Left lung (tissue), 14 donors: ENCODE measurements at regions of chr12 and their contacts with region 1.

Region 1: DNA sequence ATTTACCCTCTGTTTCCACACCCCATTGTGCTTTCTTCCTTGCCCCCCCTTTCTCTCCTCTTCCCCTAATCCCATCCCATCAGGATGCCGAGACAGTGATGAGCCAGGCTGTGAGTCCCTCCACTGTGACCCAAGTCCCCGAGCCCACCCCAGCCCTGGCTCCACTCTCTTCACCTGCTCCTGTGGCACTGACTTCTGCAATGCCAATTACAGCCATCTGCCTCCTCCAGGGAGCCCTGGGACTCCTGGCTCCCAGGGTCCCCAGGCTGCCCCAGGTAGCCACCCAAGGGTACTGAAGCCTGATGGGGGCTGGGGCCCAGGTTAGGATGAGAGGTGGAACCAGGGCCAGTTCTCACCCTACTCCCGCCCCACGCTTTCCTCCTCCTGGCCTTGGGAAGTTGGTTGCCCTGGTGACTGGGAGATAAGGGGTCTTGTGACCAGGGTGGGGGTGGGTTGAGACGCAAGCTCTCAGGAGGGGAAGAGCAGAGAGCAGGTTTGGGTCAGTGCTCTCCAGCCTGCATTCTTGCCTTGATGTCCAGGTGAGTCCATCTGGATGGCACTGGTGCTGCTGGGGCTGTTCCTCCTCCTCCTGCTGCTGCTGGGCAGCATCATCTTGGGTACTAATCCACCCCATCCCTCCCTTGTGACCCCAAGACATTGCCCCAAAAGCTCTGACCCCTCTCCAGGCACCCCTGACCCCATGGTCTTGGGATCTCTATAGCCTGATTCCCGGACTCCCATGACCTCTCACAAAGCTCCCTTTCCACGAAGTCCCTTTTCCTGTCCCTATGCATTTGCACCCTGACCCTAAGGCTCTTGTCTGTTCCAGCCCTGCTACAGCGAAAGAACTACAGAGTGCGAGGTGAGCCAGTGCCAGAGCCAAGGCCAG is 1.2 kb downstream of the AMHR2 start:
- DNase-seq: peak in 2 of 4 donors; percentile 16 to 32
- ATAC-seq: no peak
- H3K4me3 ChIP-seq: no peak overlapping the region
- H3K27ac ChIP-seq: no peak overlapping the region
- H3K4me1 ChIP-seq: peaks cover 0 to 12% of the 10 kb centered on the region in 2 donors
- H3K27me3 ChIP-seq: no peaks in the 10 kb centered on the region
- CTCF ChIP-seq: no peak

Region 2: DNA sequence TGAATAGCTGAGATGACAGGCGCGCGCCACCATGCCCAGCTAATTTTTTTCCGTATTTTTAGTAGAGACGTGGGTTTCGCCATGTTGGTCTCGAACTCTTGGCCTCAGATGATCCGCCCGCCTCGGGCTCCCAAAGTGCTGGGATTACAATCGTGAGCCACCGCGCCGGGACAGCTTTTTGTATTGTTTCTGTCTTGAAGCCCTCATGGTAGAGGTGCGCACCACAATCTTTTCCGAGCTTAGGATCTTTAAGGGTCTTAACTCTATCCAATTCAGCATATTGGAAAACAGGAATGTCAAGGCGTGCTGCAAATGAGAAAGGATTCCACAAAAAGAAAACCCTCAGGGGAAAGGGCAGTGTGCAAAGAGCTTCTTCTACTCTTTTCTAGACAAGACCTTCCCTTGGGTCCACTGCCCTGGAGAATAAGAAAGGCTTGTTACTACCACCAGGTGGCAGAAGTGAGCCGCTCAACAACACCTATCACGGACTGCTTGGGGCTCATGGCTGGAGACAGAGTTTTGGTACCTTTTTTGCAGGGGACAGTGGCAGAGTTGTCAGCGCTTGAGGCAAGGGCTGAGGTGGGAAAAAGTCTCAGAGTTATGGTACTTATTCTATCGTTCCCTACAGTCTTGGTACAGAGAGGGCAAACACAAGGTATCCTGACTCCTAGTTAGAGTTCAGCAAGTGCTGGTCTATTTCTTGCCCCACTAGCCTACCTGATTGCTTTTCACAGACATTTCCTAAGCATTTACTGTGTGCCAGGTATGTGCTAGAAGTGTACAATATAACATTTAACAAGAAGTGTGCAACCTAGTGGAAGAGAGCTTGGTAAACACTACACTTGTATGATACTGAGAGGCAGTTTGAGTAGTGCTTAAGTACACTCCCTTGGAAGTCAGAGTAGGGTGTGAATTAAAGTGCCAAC is 72.3 kb before region 1 on chr12:
- intact Hi-C with region 1: loop called in 1 of 2 experiments (anchors 5 kb)
- DNase-seq: peak in 3 of 4 donors; percentile 78 to 92 (median 82)
- ATAC-seq: peak; percentile 97
- H3K4me3 ChIP-seq: no peak overlapping the region
- H3K27ac ChIP-seq: peak overlapping the region; percentile 39 to 53
- H3K4me1 ChIP-seq: peaks cover 4 to 13% of the 10 kb centered on the region in 2 donors
- H3K27me3 ChIP-seq: no peaks in the 10 kb centered on the region
- CTCF ChIP-seq: peak; percentile 93 to 94